BJ (cell line): ENCODE measurements at regions of chr4 and their contacts with region 1.

Region 1: GRCh38 chr4:119016636-119017035 is 119.0 kb upstream of the MYOZ2 start:
- DNase-seq: peak; percentile 94
- H3K4me3 ChIP-seq: no peak overlapping the region
- H3K27me3 ChIP-seq: no peaks in the 10 kb centered on the region
- CTCF ChIP-seq: no peak

Region 2: DNA sequence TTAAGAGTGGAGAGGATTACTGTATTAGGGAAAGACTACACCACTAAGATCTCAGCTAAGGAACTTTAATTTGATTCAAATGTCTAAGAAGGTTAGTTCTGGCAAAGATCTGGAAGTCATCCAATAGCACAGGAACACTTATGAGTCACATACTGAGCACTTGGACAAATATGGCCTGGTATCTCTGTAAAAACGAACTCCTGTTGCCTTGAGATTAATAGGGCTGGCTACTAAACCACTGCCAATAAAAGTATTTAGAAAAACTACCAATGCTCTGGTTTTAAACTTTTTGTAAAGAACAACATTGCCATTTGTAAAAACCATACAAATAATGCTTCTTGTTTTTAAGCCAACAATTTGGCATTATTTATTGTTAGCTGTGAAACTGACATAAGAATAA is 251.2 kb before region 1 on chr4:
- CTCF ChIA-PET with region 1: no interaction called
- POLR2A ChIA-PET with region 1: no interaction called
- DNase-seq: peak; percentile 93
- H3K4me3 ChIP-seq: no peak overlapping the region
- H3K27me3 ChIP-seq: no peaks in the 10 kb centered on the region
- CTCF ChIP-seq: no peak

Region 3: DNA sequence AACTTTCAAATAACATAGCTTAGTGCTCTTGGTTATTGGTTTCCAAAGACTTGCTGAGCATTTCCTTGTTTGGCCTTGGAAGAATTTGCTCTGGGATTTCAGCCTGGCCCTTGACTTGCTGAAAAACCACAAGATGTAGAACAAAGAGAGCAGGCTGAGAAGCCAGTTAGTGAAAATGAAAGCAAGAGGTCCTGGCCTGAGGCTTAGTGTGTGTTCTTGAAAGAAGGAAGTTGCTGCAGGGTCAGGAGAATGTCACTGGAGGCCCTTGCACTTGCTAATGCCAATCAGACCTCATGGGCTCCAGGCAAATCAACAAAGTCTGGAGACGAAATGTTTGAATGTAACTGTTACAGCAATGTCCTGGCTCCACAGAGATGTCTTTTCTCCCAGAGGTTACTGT is 48.6 kb before region 1 on chr4:
- CTCF ChIA-PET with region 1: no interaction called
- POLR2A ChIA-PET with region 1: no interaction called
- DNase-seq: peak; percentile 70
- H3K4me3 ChIP-seq: no peak overlapping the region
- H3K27me3 ChIP-seq: no peaks in the 10 kb centered on the region
- CTCF ChIP-seq: no peak

Region 4: GRCh38 chr4:118989098-118990080 is 27.2 kb before region 1 on chr4:
- CTCF ChIA-PET with region 1: interaction called, 3 read pairs
- POLR2A ChIA-PET with region 1: interaction called, 12 read pairs
- DNase-seq: peak; percentile 100
- H3K4me3 ChIP-seq: no peak overlapping the region
- H3K27me3 ChIP-seq: no peaks in the 10 kb centered on the region
- CTCF ChIP-seq: no peak

Region 5: DNA sequence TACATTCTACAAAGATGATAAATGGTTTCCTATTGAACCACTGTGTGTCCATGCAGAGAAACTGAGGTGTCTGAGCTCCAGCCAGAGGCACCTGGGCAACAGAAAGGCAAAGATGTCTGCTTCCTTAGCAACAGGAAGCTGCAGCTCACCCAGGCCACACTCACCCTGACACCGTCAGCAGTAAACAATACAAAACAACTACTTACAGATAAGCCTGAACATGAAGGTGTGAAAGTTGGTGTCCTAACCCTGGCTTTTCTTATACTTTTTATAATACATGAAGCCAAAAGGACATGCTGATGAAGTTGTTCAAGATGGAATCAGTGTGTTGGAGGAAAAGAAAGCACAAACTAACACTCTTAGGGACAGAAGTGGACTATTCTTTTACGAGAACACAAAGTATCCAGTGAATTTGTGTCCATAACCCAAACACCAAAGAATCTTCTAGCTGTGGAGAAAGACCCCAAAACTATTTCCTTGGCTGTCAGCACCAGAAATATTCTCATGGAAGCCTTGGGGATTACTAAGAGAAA is 10.6 kb before region 1 on chr4:
- CTCF ChIA-PET with region 1: interaction called, 4 read pairs
- POLR2A ChIA-PET with region 1: interaction called, 11 read pairs
- DNase-seq: no peak
- H3K4me3 ChIP-seq: no peak overlapping the region
- H3K27me3 ChIP-seq: no peaks in the 10 kb centered on the region
- CTCF ChIP-seq: no peak

Region 6: DNA sequence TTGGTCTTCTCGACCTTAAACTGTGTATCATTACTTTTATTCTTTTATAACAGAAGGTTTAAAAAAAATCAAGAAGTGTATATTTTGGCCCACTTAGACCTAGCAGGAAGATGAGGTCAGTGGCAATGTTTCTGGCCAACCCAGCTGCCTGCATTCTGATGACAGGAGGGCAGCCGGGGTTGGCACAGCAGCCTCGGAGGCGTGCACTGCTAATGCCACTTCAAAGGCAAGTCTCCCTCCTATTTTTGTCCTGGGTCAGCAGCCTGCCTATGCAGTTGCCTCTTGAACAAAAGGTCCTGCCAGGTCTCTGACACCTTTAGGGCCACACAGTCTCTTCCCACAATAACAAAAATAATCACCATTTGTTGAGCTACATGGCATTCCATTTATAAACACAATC is 29.6 kb after region 1 on chr4:
- CTCF ChIA-PET with region 1: no interaction called
- POLR2A ChIA-PET with region 1: no interaction called
- DNase-seq: no peak
- H3K4me3 ChIP-seq: no peak overlapping the region
- H3K27me3 ChIP-seq: no peaks in the 10 kb centered on the region
- CTCF ChIP-seq: no peak